PC-9 (cell line): ENCODE measurements at regions of chr20 and their contacts with region 1.

Region 1: DNA sequence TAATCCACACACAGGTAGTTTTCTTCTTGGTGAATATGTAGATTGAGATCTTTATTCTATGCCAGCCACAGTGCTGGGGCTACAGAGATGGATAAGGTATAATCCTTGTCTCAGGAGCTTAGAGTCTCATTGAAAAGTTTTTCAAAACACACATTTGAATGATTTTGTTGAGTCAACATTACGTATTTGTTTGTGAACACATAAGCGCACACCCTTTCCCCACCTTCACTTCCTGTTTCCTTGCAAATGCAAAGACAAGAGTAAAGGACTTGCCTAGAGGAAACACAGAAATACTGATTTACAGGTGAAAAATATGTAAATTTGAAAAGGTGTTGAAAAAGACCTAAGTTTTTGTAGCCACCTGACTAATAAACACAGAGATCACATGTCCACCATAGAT is 27.8 kb downstream of the VAPB start:
- DNase-seq: no peak
- H3K4me3 ChIP-seq: no peak overlapping the region
- H3K27ac ChIP-seq: no peak overlapping the region
- H3K4me1 ChIP-seq: no peaks in the 10 kb centered on the region
- H3K27me3 ChIP-seq: no peaks in the 10 kb centered on the region
- CTCF ChIP-seq: no peak

Region 2: DNA sequence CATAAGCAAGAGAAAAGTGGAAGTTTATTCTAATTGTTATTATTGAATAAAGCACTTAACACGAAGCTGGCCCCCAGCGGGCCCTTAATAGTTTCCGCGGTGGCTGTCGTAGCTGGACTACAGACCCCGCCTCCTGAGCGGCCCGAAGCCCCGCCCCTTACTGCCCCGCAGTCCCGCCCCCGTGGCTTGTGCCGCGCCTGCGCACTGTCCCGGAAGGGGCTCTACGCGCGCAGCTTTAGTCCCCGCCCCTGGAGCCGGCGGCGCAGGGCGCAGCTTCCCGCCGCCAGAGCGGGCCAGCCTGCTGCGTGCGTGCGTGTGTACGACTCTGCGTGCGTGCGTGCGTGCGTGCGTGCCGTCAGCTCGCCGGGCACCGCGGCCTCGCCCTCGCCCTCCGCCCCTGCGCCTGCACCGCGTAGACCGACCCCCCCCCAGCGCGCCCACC is 27.9 kb before region 1 on chr20 and contains the start of gene VAPB:
- CTCF ChIA-PET with region 1: no interaction called
- POLR2A ChIA-PET with region 1: interaction called, 31 read pairs
- intact Hi-C with region 1: no loop called
- DNase-seq: peak; percentile 85 to 98
- H3K4me3 ChIP-seq: peak within 1 kb of the TSS; percentile 61
- H3K27ac ChIP-seq: peak within 1 kb of the TSS; percentile 67
- H3K4me1 ChIP-seq: peaks cover 18% of the 10 kb centered on the region
- H3K27me3 ChIP-seq: no peaks in the 10 kb centered on the region
- CTCF ChIP-seq: no peak
- total RNA-seq, gene VAPB: 73.0 and 80.6 TPM in 2 replicates

Region 3: DNA sequence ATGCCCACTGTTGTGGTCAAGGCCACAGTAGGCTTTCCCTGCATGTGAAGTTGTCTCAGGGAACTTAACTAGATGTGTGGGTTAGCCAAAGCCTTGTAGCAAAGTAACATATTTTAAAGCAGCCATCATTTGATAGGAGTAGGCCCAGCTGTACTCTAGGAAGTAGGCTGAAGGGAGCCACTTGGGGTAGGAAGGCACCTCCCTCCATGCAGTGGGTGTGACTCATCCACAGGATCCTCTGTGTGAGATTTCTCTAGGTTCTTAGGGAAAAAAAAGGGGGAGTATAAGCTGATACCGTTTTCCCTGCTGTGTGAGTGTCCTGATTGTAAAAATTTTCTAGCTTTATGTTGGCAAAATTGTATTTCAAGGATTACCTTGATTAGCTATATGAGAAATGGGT is 16.9 kb after region 1 on chr20:
- CTCF ChIA-PET with region 1: no interaction called
- POLR2A ChIA-PET with region 1: no interaction called
- intact Hi-C with region 1: no loop called
- DNase-seq: no peak
- H3K4me3 ChIP-seq: no peak overlapping the region
- H3K27ac ChIP-seq: no peak overlapping the region
- H3K4me1 ChIP-seq: no peaks in the 10 kb centered on the region
- H3K27me3 ChIP-seq: no peaks in the 10 kb centered on the region
- CTCF ChIP-seq: no peak

Region 4: DNA sequence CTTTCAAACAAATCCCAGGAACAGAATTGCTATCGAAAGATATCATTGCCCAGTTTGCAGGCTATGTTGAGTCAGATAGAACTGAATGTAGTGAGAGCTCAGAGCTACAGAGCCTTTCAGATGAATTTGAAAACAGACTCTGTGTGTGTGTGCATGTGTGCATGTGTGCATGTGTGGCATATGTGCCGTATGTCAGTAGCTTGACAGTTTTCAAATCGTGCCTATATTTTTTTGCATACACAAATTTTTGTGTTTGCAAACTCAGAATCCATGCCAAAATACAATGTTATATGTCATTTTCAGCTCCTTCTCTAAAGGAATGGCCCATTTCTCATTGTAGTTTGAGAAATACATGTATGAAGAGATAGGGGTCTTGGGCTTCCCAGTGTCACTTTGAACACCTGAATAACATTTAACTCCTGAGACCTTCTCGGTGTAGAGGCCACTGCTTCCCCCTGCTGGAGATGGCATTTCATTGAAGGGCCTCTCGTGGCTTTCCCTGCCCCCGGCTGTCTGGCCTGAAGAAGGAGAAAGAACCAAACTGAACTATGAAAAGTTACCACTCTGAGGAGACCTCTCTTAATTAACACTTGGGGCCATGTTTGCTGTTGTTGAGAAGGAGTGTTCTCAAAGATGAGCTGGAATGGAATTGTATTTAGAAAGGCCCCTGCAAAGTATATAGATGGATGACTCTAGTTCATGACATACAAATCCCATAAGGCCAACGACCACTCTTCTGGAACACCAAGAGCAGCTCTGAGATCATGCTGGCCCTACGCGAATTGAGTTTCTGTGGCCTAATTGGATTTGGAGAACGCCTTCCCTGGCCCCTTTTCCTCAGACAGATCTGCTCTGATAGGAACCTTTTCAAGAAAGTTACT is 30.9 kb after region 1 on chr20:
- CTCF ChIA-PET with region 1: no interaction called
- POLR2A ChIA-PET with region 1: no interaction called
- intact Hi-C with region 1: loop called (anchors 2 kb)
- DNase-seq: peak in 1 of 2 experiments; percentile 56
- H3K4me3 ChIP-seq: no peak overlapping the region
- H3K27ac ChIP-seq: no peak overlapping the region
- H3K4me1 ChIP-seq: no peaks in the 10 kb centered on the region
- H3K27me3 ChIP-seq: no peaks in the 10 kb centered on the region
- CTCF ChIP-seq: peak; percentile 75